HepG2 (cell line): ENCODE measurements at regions of chr3 and their contacts with region 1.

Region 1: DNA sequence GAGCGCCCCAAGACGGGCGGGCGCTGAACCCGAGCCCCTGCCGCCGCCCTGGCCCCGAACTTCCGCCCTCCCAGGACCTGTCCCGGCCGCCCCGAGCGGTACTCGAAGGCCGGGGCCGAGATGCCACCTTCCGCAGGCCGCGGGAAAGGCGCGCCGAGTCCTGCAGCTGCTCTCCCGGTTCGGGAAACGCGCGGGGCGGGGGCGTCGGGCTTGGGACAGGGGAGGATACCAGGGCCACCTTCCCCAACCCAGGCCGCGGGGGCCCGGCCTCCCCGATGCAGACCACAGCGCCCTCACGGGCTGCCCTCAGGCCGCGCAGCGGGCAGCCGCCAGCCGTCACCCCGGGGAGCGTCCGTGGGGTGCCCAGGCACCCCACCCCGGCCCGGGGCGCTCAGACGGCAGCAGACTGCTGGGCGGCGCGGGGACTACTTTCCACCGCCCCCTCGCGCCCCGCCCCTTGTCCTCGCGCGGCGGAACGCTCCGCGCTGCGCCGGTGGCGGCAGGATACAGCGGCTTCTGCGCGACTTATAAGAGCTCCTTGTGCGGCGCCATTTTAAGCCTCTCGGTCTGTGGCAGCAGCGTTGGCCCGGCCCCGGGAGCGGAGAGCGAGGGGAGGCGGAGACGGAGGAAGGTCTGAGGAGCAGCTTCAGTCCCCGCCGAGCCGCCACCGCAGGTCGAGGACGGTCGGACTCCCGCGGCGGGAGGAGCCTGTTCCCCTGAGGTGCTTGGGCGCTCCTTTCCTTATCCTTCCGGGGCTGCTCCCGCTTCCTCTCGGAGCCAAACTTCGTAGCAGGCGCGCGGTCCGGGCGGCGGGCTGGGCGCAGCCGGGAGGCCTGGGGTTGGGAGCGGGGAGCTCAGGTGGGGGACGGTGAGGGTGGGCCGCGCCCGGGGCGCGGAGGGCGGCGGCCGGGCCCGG is at the start of gene CTNNB1:
- DNase-seq: peak; percentile 71
- ATAC-seq: peak; percentile 86
- H3K4me3 ChIP-seq: peak within 1 kb of the TSS; percentile 98 to 100 (median 99)
- H3K27ac ChIP-seq: peak within 1 kb of the TSS; percentile 93
- H3K4me1 ChIP-seq: peaks cover 26% of the 10 kb centered on the region
- H3K27me3 ChIP-seq: peaks cover 0 to 5% of the 10 kb centered on the region in 2 experiments; a peak in 1 of 5 replicates
- CTCF ChIP-seq: no peak
- EP300 ChIP-seq: peak in 1 of 2 experiments; percentile 62; a peak in 3 of 4 replicates
- POLR2A ChIP-seq: peak; percentile 93 to 96
- RAD21 ChIP-seq: peak; percentile 68
- total RNA-seq, gene CTNNB1: 489 and 700 TPM in 2 replicates

Region 2: GRCh38 chr3:40580494-40581091 is 618.6 kb before region 1 on chr3:
- CTCF ChIA-PET with region 1: no interaction called
- POLR2A ChIA-PET with region 1: no interaction called
- in situ Hi-C with region 1: loop called (anchors 25 kb)
- intact Hi-C with region 1: loop called (anchors 2 kb)
- DNase-seq: peak; percentile 50
- ATAC-seq: peak; percentile 81
- H3K4me3 ChIP-seq: no peak overlapping the region
- H3K27ac ChIP-seq: no peak overlapping the region
- H3K4me1 ChIP-seq: peaks cover 9% of the 10 kb centered on the region; the same call in 1 of the 2 replicates
- H3K27me3 ChIP-seq: peaks cover 2 to 4% of the 10 kb centered on the region in 2 experiments; a peak in 2 of 5 replicates
- CTCF ChIP-seq: peak; percentile 95
- EP300 ChIP-seq: no peak
- POLR2A ChIP-seq: no peak
- RAD21 ChIP-seq: peak; percentile 81

Region 3: DNA sequence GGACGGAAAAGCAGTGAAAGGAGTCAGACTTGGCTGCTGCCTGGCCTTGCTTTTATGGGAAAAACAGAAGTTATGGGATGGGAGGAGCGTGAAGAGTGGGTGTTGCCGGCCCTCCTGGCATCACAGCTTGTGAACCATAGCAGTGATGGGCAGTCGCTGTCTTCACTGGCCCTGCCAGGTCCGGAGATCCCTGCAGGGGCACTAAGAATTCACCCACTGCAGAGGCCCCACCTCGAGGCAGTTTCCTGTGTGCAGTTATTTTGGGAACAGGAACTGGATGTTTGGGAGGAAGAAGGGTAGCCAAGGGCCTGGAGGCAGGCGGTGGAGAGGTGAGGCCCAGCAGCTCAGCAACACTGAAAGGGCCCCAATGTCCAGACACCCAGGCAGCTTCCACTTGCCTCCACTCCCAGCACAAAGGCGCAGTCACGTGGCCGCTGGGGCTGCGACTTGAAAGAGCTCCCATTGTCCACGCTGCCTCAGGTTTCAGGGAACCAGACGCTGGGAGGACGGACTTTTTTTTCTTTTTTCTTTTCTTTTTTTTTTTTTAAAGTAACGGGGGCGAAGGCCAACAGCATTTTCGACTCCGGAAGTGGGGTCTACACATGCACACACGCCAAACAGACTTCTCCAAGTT is 418.8 kb before region 1 on chr3:
- CTCF ChIA-PET with region 1: no interaction called
- POLR2A ChIA-PET with region 1: no interaction called
- in situ Hi-C with region 1: no loop called
- intact Hi-C with region 1: loop called (anchors 5 kb)
- DNase-seq: peak; percentile 46
- ATAC-seq: peak; percentile 87
- H3K4me3 ChIP-seq: peak overlapping the region in 1 of 3 experiments; percentile 27; a peak in 1 of 6 replicates
- H3K27ac ChIP-seq: no peak overlapping the region
- H3K4me1 ChIP-seq: peaks cover 21% of the 10 kb centered on the region
- H3K27me3 ChIP-seq: peaks cover 0 to 10% of the 10 kb centered on the region in 2 experiments; a peak in 1 of 5 replicates
- CTCF ChIP-seq: no peak
- EP300 ChIP-seq: no peak
- POLR2A ChIP-seq: no peak
- RAD21 ChIP-seq: no peak

Region 4: GRCh38 chr3:40930131-40930538 is 269.1 kb before region 1 on chr3:
- CTCF ChIA-PET with region 1: no interaction called
- POLR2A ChIA-PET with region 1: no interaction called
- in situ Hi-C with region 1: no loop called
- intact Hi-C with region 1: loop called (anchors 10 kb)
- DNase-seq: peak; percentile 64
- ATAC-seq: peak; percentile 98
- H3K4me3 ChIP-seq: no peak overlapping the region
- H3K27ac ChIP-seq: no peak overlapping the region
- H3K4me1 ChIP-seq: peaks cover 34% of the 10 kb centered on the region
- H3K27me3 ChIP-seq: no peaks in the 10 kb centered on the region
- CTCF ChIP-seq: peak; percentile 54
- EP300 ChIP-seq: peak in 1 of 2 experiments; percentile 21; a peak in 1 of 4 replicates
- POLR2A ChIP-seq: no peak
- RAD21 ChIP-seq: no peak

Region 5: GRCh38 chr3:41216993-41217392 is 17.8 kb after region 1 on chr3:
- CTCF ChIA-PET with region 1: no interaction called
- POLR2A ChIA-PET with region 1: interaction called, 17 read pairs
- in situ Hi-C with region 1: no loop called
- intact Hi-C with region 1: no loop called
- DNase-seq: no peak
- ATAC-seq: no peak
- H3K4me3 ChIP-seq: no peak overlapping the region
- H3K27ac ChIP-seq: no peak overlapping the region
- H3K4me1 ChIP-seq: peaks cover 97% of the 10 kb centered on the region
- H3K27me3 ChIP-seq: no peaks in the 10 kb centered on the region
- CTCF ChIP-seq: no peak
- EP300 ChIP-seq: no peak
- POLR2A ChIP-seq: no peak
- RAD21 ChIP-seq: no peak

Region 6: DNA sequence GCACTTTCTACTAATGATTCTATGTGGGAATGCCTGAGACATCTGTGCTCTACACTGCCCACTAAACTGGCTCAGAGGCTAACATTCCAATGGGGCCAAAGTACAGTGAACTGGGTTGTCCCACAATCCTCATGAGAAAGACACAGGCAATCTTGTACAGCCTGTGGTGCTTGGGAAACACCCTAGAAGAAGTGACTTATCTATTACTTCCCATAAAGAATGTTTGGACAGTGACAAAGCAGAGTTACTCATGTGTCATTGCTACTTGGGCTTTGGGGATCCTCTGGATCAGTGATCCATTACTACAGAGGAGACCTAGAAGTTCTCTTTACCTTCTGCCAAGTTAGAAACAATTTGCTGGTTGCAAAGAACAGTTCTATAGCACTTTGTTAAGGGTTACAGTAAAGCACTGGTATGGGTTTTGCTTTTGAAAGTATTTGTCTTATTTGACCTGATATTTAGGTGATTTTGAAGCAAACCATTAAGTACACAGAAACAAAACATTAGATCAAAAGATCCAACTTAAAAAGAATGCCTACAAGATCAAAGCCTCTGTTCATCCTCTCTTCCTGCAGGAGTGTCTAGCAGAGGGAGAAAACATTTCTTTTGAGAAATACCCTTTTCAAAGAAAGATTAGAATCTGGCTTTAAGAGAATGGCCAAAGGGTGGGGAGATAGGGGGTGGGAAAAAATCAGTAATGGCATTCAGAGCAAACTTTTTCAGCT is 75.9 kb after region 1 on chr3:
- CTCF ChIA-PET with region 1: no interaction called
- POLR2A ChIA-PET with region 1: interaction called, 20 read pairs
- in situ Hi-C with region 1: no loop called
- intact Hi-C with region 1: loop called (anchors 5 kb)
- DNase-seq: peak; percentile 88
- ATAC-seq: peak; percentile 93
- H3K4me3 ChIP-seq: peak overlapping the region; percentile 15 to 59 (median 40); a peak in 3 of 6 replicates
- H3K27ac ChIP-seq: peak overlapping the region; percentile 81
- H3K4me1 ChIP-seq: peaks cover 65% of the 10 kb centered on the region
- H3K27me3 ChIP-seq: no peaks in the 10 kb centered on the region
- CTCF ChIP-seq: no peak
- EP300 ChIP-seq: peak in 1 of 2 experiments; percentile 65; a peak in 2 of 4 replicates
- POLR2A ChIP-seq: no peak
- RAD21 ChIP-seq: no peak